ENCODE measurements at regions of chr10 and their contacts with region 1.

Region 1: GRCh38 chr10:29304264-29305030 is 15.6 kb downstream of the LYZL1 start:
- DNase-seq: peak; percentile 80
- H3K4me3 ChIP-seq: no peak overlapping the region; a peak in 1 of 4 replicates
- H3K27ac ChIP-seq: peak overlapping the region in 1 of 2 experiments; percentile 66; a peak in 2 of 4 replicates
- H3K4me1 ChIP-seq: peaks cover 0 to 3% of the 10 kb centered on the region in 2 experiments; a peak in 1 of 4 replicates
- H3K27me3 ChIP-seq: no peaks in the 10 kb centered on the region
- CTCF ChIP-seq: peak; percentile 85
- EP300 ChIP-seq: no peak
- RAD21 ChIP-seq: peak; percentile 97

Region 2: DNA sequence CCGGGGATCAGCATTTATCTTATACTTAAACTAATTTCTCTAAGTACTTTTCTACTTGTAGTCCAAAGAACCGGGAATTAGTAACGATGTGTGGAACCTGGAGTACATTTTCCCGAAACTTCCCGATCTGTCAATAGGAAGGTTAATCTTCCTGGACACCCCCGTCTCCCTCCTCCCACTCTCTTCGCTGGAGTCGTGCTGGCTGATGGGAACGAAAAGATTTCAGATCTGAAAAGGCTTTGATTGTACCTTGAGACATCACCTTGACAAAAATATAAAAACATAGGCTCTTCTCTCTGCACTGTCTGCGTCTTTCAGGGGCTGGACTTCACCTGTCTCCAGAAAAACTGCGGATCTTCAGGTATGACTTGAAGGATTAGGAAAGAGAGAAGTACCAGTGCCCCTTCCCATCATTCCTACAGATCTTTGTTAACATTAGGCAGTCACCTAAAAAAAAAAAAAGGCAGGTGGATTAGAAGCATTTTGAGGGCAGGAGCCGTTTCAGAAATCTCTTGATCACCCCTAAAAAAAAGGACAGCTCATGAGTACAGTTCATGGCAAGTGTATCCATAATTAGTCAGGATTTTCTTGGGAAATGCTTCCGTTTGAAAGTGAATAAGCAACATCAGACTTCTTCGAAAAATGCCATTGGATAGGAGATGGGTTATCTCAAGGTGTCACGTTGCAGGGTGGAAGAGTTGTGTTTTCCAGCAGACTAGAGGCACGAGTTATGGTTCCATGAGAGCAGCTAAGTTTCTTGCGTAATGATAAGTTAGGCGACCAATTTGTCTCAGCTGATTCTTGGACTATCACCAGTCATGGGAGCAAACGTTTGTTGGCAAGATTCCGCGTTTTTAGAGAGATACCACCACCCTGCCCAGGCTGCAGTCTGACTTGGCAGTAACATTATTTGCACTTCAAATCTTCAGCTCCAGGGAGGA is 635.0 kb before region 1 on chr10:
- CTCF ChIA-PET with region 1: interaction called, 133 read pairs
- POLR2A ChIA-PET with region 1: no interaction called
- DNase-seq: no peak
- H3K4me3 ChIP-seq: peak overlapping the region; percentile 51 to 67
- H3K27ac ChIP-seq: no peak overlapping the region
- H3K4me1 ChIP-seq: no peaks in the 10 kb centered on the region; a peak in 1 of 4 replicates
- H3K27me3 ChIP-seq: peaks cover 17% of the 10 kb centered on the region; the same call in 1 of the 2 replicates
- CTCF ChIP-seq: no peak
- EP300 ChIP-seq: no peak
- RAD21 ChIP-seq: no peak

Region 3: DNA sequence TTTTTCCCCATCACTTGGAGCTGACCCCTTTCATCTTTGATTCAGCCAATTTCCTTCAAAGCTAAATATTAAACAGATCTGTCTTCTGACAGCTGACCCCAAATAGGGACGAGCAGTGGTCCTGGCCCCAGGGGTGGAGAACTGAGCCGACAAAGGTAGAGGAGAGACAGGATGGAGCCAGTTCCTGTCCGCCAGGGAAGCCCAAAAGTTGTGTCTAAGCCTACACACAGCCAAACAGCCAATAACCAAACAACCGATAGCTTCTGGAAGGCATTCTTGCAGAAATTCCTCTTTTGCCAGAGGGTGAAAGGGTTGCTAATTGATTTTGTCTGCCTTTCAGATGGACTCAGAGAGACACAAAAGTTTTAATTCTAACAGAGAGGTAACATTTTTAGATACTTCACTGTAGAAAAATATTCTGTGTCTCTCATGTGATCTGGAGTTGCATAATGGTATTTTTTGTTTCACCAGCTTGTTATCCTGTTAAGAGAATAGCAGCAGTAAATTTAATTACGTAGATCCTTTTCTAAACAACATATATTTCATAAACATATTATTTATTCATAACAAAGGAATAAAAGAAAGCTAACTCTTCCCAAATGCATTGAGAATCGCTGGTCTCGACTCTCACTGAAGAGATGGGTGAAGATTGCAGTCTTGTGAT is 177.3 kb before region 1 on chr10:
- CTCF ChIA-PET with region 1: interaction called, 34 read pairs
- POLR2A ChIA-PET with region 1: no interaction called
- DNase-seq: no peak
- H3K4me3 ChIP-seq: no peak overlapping the region
- H3K27ac ChIP-seq: peak overlapping the region in 1 of 2 experiments; percentile 23; a peak in 1 of 4 replicates
- H3K4me1 ChIP-seq: peaks cover 7 to 8% of the 10 kb centered on the region in 2 experiments; a peak in 3 of 4 replicates
- H3K27me3 ChIP-seq: no peaks in the 10 kb centered on the region; the same call in 1 of the 2 replicates
- CTCF ChIP-seq: no peak
- EP300 ChIP-seq: no peak
- RAD21 ChIP-seq: no peak

Region 4: GRCh38 chr10:29239569-29240472 is 64.6 kb before region 1 on chr10:
- CTCF ChIA-PET with region 1: interaction called, 19 read pairs
- POLR2A ChIA-PET with region 1: no interaction called
- DNase-seq: peak; percentile 52
- H3K4me3 ChIP-seq: no peak overlapping the region
- H3K27ac ChIP-seq: no peak overlapping the region
- H3K4me1 ChIP-seq: peaks cover 0 to 5% of the 10 kb centered on the region in 2 experiments; a peak in 1 of 4 replicates
- H3K27me3 ChIP-seq: no peaks in the 10 kb centered on the region
- CTCF ChIP-seq: peak; percentile 55
- EP300 ChIP-seq: no peak
- RAD21 ChIP-seq: peak; percentile 65

Region 5: DNA sequence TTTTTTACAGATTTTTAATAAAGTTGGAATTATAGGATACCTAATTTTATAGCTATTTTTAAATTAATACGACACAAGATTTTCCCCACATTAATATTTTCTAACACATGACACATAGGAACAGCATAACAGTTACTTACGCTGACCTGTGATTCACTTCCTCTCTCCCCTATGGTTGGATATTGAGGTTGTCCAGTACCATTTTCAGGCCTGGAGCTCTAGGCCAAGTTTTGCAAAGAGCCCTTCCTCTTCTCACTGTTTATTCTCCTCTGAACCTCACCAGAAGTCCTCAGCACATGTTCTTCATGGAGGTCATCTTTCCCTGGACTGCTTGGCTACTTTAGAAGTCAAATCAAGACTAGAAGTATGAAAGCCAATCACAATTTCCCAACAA is 12.6 kb after region 1 on chr10:
- CTCF ChIA-PET with region 1: interaction called, 19 read pairs
- POLR2A ChIA-PET with region 1: no interaction called
- DNase-seq: no peak
- H3K4me3 ChIP-seq: no peak overlapping the region
- H3K27ac ChIP-seq: peak overlapping the region in 1 of 2 experiments; percentile 89; a peak in 2 of 4 replicates
- H3K4me1 ChIP-seq: peaks cover 0 to 25% of the 10 kb centered on the region in 2 experiments; a peak in 2 of 4 replicates
- H3K27me3 ChIP-seq: peaks cover 22% of the 10 kb centered on the region; the same call in 1 of the 2 replicates
- CTCF ChIP-seq: no peak
- EP300 ChIP-seq: no peak
- RAD21 ChIP-seq: no peak

Region 6: DNA sequence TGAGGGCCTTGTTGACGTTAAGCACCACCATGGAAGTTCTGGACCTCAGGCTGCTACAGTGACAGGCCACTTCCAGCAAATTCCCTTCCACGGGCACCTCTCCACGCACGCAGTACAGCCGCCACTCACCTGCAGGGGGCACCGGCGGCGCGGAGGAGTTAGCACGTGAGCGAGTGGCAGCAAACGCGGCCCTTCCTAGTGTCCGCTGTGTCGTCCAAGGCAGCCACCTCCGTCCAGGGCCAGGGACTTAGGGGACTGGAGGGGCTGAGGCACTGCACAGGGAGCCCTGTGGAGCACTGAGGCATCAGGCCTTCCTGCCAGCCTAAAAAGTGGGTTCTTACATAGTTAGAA is 165.9 kb after region 1 on chr10:
- CTCF ChIA-PET with region 1: no interaction called
- POLR2A ChIA-PET with region 1: no interaction called
- DNase-seq: peak; percentile 52
- H3K4me3 ChIP-seq: no peak overlapping the region; a peak in 1 of 4 replicates
- H3K27ac ChIP-seq: no peak overlapping the region
- H3K4me1 ChIP-seq: peaks cover 3 to 18% of the 10 kb centered on the region in 2 experiments; a peak in 3 of 4 replicates
- H3K27me3 ChIP-seq: no peaks in the 10 kb centered on the region
- CTCF ChIP-seq: peak; percentile 51
- EP300 ChIP-seq: no peak
- RAD21 ChIP-seq: peak; percentile 14; the same call in 1 of the 2 replicates

Measured in SK-N-SH (cell line).